Heart left ventricle (tissue), 16 donors: ENCODE measurements at regions of chr2 and their contacts with region 1.

Region 1: DNA sequence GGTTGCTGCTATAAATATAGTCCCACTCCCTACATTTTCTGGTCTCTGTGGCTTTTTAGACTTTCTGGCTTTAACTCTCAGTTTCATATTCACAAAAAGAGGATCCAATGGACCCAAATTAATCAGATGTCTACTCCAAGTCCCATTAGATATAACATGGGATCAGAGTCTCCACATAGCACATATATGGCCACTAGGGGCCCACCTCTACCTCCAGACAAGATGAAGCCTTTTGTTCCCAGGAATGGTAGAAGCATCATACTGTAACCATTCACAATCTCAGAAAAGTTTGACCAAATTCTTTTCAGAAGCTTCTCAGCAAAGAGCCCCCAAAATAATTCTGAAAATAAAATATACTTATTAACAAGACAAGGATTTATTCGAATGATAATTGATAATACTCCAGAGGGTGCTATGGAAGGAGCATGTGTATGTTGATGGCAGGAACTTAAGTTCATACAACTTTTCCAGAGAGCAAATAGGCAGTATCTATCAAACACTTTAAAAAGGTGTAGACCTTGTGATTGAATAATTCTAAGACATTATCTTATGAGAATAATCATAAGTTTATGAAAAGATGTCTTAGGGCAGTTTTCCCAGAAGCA is 382.3 kb upstream of the CRIM1 start:
- DNase-seq: no peak
- ATAC-seq: peak in 2 of 4 donors; percentile 54 to 81
- H3K4me3 ChIP-seq: no peak overlapping the region
- H3K27ac ChIP-seq: peak overlapping the region in 11 of 12 donors; percentile 21 to 86 (median 59)
- H3K4me1 ChIP-seq: peaks cover 0 to 3% (median 0%) of the 10 kb centered on the region in 12 donors
- H3K27me3 ChIP-seq: no peaks in the 10 kb centered on the region
- CTCF ChIP-seq: peak; percentile 24 to 57 (median 42)
- POLR2A ChIP-seq: no peak

Region 2: DNA sequence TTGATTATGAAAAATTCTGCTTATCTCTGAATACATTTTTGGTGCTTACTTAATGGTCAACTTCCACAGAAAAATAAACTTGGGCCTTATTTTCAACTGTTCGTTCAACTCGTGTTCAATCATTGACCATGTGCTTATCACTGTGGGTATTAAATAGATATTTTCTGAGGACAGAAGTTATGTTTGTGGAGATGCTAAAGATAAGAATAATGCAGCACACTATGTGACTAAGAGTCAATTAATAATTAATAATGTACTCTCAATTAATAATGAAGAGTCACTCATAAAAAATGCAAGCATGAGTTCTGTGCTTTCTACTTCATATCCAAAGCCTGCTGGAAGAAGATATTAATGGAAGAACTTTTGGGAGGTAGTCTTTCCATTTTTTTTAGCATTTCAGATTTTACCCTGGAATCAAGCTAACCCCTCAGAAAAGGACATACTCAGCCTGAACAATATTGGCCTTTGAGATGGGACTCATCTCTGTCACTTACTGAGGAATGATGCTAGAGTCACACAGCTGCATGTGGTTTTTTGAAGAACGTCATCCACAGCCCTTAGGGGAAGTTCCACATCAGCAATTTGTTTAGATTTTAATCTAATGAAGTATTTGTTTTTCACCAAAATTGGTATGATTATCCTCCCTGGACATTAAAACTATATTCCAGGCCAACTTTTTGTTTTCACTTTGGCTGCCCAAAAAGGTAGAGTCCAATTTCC is 190.4 kb after region 1 on chr2:
- intact Hi-C with region 1: no loop called
- DNase-seq: no peak
- ATAC-seq: no peak
- H3K4me3 ChIP-seq: no peak overlapping the region
- H3K27ac ChIP-seq: no peak overlapping the region
- H3K4me1 ChIP-seq: no peaks in the 10 kb centered on the region
- H3K27me3 ChIP-seq: peaks cover 0 to 4% (median 0%) of the 10 kb centered on the region in 9 donors
- CTCF ChIP-seq: no peak
- POLR2A ChIP-seq: no peak

Region 3: DNA sequence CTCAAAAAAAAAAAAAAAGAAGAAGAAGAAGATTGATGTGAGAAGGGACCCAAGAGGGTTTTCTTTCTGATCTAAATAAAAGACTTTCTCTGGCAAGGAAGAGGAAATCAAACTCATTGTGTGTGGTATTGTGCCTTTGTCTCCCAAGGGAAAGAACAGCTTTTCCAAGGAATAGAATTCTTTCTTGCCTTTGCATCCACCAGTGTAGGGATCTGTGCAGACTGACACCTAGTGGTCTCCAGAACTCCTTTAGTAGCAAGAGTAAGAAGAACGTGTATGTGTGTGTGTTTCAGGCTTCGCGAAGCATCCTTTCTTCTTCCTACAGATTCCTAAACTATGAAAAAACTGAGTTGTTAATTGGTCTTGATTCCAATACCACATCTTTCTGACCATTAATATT is 348.9 kb after region 1 on chr2:
- intact Hi-C with region 1: loop called in 3 of 10 experiments (anchors 5 to 10 kb)
- DNase-seq: no peak
- ATAC-seq: peak in 1 of 4 donors; percentile 69
- H3K4me3 ChIP-seq: no peak overlapping the region
- H3K27ac ChIP-seq: no peak overlapping the region
- H3K4me1 ChIP-seq: no peaks in the 10 kb centered on the region
- H3K27me3 ChIP-seq: no peaks in the 10 kb centered on the region
- CTCF ChIP-seq: peak in 10 of 12 donors; percentile 25 to 54 (median 31)
- POLR2A ChIP-seq: no peak